ENCODE measurements at regions of chr14 and their contacts with region 1.

Region 1: GRCh38 chr14:24806061-24806678 is 172.2 kb upstream of the GZMB start:
- DNase-seq: peak; percentile 68
- H3K4me3 ChIP-seq: no peak overlapping the region
- H3K27ac ChIP-seq: peak overlapping the region; percentile 32
- H3K4me1 ChIP-seq: peaks cover 47% of the 10 kb centered on the region
- H3K27me3 ChIP-seq: no peaks in the 10 kb centered on the region
- CTCF ChIP-seq: peak; percentile 93

Region 2: DNA sequence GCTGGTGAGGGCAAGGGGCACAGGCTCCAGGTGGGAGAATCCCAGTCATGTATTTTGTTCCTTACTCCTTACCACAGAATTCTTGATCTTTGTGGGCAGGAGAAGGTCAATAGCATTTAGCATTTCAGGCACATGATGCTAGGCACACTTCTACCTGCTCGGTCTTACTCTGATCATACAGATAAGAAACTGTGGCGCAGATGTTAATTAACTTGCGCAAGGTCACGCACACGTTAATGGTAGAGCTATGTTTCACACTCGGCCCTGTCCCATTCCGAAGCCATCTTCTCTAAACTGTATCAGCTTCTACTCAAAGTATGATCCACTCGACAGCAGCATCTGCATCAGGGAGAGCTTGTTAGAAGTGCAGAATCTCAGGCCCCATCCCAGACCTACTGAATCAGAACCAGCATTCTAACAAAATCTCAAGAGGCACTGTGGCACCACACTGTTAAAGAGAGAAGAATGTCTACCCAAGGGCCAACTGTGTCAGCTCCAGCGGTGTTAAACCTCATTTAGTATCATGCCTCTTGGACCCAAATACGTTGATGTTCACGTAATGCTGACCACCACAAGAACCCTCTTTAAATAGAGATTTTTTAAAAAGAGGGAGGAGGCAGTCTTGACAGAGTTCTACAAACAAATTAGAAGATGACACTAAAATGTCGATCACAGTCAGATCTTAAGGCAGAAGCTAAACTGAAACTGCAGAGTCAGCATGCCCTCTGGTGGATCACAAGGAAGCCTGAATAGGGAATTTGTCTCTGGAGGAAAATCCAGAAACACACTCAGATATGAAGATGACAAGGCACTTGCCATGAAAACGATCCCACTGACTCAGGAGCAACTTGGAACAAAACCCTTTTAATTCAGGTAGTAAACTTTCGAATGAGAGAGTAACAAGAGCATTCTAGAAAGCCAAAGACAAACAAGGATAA is 236.5 kb after region 1 on chr14:
- intact Hi-C with region 1: loop called (anchors 5 kb)
- DNase-seq: no peak
- H3K4me3 ChIP-seq: peak overlapping the region; percentile 12
- H3K27ac ChIP-seq: peak overlapping the region; percentile 16
- H3K4me1 ChIP-seq: peaks cover 95% of the 10 kb centered on the region
- H3K27me3 ChIP-seq: no peaks in the 10 kb centered on the region
- CTCF ChIP-seq: peak; percentile 67

Region 3: GRCh38 chr14:25431211-25432048 is 625.3 kb after region 1 on chr14:
- intact Hi-C with region 1: no loop called
- DNase-seq: no peak
- H3K4me3 ChIP-seq: no peak overlapping the region
- H3K27ac ChIP-seq: no peak overlapping the region
- H3K4me1 ChIP-seq: no peaks in the 10 kb centered on the region
- H3K27me3 ChIP-seq: no peaks in the 10 kb centered on the region
- CTCF ChIP-seq: no peak